Calu3 (cell line): ENCODE measurements at regions of chr1 and their contacts with region 1.

Region 1: GRCh38 chr1:67853704-67854103 is 20.4 kb upstream of the GNG12 start:
- DNase-seq: peak; percentile 83
- H3K4me3 Mint-ChIP-seq: no peak overlapping the region
- H3K27ac Mint-ChIP-seq: no peak overlapping the region
- H3K4me1 Mint-ChIP-seq: peaks cover 20% of the 10 kb centered on the region
- H3K27me3 Mint-ChIP-seq: no peaks in the 10 kb centered on the region
- CTCF ChIP-seq: peak; percentile 87

Region 2: GRCh38 chr1:67535474-67535873 is 318.2 kb before region 1 on chr1:
- CTCF ChIA-PET with region 1: interaction called, 8 read pairs
- intact Hi-C with region 1: loop called (anchors 5 kb)
- DNase-seq: peak; percentile 89
- H3K4me3 Mint-ChIP-seq: no peak overlapping the region
- H3K27ac Mint-ChIP-seq: no peak overlapping the region
- H3K4me1 Mint-ChIP-seq: no peaks in the 10 kb centered on the region
- H3K27me3 Mint-ChIP-seq: no peaks in the 10 kb centered on the region
- CTCF ChIP-seq: peak; percentile 83

Region 3: DNA sequence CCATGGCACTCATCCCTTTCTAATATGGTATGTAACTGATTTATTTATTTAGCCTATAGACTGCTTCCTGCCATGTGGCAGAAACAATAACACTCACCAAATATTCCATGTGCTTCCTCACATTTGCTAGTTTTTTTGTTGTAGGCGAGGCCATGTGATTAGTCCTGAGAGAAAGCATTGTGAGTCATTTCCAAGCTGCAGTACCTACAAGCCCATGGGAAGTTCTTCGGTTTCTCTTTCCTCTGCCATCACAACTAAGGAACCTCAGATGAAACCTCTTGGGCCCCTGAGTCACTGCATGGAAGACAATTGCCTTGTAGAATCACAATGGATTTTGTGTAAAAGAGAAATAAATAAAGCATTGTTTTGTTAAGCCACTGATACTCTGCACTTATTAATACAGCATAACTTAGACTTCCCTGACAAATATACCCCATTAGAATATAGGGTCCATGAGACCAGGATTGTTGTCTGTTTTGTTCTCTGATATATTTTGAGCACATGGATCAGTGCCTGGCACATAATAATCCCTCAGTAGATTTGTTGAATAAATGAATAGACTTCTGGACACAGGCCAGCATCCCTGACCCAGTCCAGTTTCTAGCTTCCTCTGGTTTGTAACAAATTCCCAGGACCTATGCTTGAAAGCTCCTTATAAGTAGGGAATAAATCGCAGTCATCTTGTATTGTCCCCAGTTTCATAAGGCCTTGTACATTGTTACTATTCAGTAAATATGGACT is 227.0 kb before region 1 on chr1:
- CTCF ChIA-PET with region 1: no interaction called
- intact Hi-C with region 1: no loop called
- DNase-seq: peak; percentile 11
- H3K4me3 Mint-ChIP-seq: no peak overlapping the region
- H3K27ac Mint-ChIP-seq: peak overlapping the region; percentile 62
- H3K4me1 Mint-ChIP-seq: peaks cover 44% of the 10 kb centered on the region
- H3K27me3 Mint-ChIP-seq: no peaks in the 10 kb centered on the region
- CTCF ChIP-seq: no peak

Region 4: DNA sequence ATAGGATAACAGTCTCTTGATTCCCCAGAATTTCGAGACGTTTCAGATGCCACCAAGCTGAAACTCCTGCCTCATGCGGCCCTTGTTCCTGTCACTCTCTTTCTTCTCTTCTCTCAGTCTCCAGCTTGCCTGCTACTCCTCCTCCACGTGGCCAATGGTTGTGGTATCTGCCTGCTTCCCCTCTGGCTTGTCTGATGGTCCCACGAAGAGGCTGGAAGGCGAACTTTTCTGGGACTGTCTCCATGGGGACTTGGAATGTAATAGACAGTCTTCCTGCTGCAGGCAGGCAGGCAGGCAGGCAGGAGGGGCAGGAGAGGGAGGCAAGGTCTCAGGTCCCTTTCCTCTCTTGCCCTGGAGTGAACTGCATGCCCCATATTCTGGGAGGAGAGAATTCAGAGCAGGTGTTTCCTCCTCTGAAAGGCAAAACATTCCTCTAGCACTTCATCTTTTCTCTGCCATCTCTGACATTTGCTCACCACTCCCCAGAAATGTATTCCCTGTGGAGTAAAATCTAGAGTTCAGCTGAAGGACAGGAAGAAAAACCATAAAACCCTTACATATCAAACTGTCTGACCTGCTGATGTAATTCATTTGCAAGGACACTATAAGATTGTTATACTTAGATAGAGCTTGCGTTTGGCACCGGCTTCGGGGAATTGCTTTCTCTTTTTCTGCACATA is 43.7 kb after region 1 on chr1:
- CTCF ChIA-PET with region 1: interaction called, 3 read pairs
- intact Hi-C with region 1: loop called (anchors 5 kb)
- DNase-seq: peak; percentile 34
- H3K4me3 Mint-ChIP-seq: peak overlapping the region; percentile 60
- H3K27ac Mint-ChIP-seq: peak overlapping the region; percentile 90
- H3K4me1 Mint-ChIP-seq: peaks cover 32% of the 10 kb centered on the region
- H3K27me3 Mint-ChIP-seq: no peaks in the 10 kb centered on the region
- CTCF ChIP-seq: no peak

Region 5: DNA sequence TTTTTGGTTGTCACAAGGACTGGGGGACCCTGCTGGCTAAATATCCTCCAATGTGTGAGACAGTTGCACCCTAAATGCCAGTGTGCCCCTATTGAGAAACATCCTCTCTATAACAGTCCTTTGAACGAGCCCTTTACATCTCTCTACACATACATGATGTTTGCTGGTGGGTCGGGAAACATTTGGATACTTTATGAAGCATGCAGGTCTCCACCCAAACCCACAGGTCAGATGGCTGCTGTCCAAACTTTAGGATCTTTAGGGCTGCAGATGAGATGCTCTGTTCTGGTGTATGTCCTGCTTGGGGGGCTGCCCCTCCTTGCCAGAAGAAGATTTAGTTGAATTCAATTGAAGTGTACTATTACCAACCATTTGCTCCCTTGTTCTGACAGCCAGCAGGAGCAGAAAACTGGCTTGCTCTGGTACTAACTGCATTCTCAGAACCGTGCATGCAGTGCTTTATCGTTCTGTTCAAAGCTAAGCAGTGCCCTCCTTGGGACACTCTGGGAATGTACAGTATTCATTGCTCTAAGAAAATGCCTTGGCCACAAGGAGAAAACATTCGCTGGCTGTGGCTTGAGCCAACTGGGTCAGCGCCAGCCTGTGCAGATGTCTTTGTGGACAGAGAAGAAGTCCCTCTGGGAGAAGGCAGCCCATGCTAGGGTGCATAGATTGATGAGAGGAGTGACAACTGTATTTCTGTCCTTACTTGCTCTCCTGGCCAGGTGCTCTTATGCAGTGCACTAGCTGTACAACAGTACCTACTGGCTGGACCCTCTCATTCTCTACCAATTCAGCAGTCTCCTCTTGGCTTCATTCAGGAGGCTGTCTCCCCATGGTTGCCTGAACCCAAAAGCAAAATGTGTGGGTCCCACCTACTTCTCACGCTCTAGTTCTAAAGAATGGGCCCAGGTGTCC is 258.1 kb after region 1 on chr1:
- CTCF ChIA-PET with region 1: interaction called, 9 read pairs
- intact Hi-C with region 1: loop called (anchors 1 kb)
- DNase-seq: peak; percentile 59
- H3K4me3 Mint-ChIP-seq: no peak overlapping the region
- H3K27ac Mint-ChIP-seq: no peak overlapping the region
- H3K4me1 Mint-ChIP-seq: peaks cover 23% of the 10 kb centered on the region
- H3K27me3 Mint-ChIP-seq: no peaks in the 10 kb centered on the region
- CTCF ChIP-seq: peak; percentile 24

Region 6: DNA sequence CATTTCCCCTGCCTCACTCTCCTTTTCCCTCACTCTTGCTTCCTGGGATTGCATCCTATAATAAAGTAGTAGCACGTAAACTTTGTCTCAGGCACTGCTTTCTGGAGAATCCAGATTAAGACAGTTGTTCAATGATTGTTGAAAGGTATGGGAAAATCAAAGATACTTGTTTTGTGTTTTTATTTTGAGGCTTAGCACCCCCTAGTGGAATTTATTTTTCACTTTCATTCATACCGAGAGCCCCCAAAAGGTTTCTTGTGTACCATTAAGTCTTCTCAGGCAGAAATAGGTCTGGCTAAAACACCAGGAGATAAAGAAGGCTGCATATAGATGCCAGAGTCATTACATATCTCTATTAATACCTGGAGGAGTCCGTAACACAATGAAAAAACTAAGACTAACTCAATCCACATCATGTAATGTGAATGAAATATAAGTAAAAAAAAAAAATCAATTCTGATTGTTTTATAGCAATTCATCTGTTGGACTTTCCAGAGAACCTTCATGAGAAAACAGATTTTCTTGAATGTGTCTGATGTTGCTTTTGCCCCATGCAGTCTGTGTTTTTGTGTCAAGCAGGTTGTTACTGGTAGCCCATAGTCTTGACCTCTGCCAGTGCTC is 492.6 kb after region 1 on chr1:
- CTCF ChIA-PET with region 1: no interaction called
- intact Hi-C with region 1: loop called (anchors 2 kb)
- DNase-seq: no peak
- H3K4me3 Mint-ChIP-seq: no peak overlapping the region
- H3K27ac Mint-ChIP-seq: peak overlapping the region; percentile 30
- H3K4me1 Mint-ChIP-seq: peaks cover 12% of the 10 kb centered on the region
- H3K27me3 Mint-ChIP-seq: no peaks in the 10 kb centered on the region
- CTCF ChIP-seq: peak; percentile 25

Region 7: DNA sequence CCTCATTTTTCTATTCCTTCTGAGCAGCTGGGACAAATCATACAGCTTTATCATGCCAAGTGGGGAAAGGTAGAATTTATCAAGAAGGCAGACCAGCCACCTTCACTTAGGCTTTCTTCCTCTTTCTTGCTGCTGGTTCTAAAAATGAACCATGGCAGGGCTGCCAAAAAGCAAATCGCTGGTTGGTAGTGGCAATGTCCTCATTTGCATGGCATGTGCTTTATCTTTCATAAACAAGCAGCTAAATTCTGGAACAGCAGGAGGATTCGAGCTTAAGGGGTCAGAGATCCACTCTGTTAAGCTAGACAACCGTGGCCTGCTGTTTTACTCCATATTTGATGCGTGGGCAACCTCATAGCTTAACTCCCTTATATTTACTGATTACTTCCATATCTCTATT is 504.7 kb after region 1 on chr1:
- CTCF ChIA-PET with region 1: no interaction called
- intact Hi-C with region 1: no loop called
- DNase-seq: no peak
- H3K4me3 Mint-ChIP-seq: no peak overlapping the region
- H3K27ac Mint-ChIP-seq: peak overlapping the region; percentile 75
- H3K4me1 Mint-ChIP-seq: peaks cover 10% of the 10 kb centered on the region
- H3K27me3 Mint-ChIP-seq: no peaks in the 10 kb centered on the region
- CTCF ChIP-seq: no peak